ENCODE measurements at regions of chr19 and their contacts with region 1.

Region 1: GRCh38 chr19:6161271-6161850 is 25.9 kb downstream of the ACSBG2 start:
- DNase-seq: no peak
- H3K4me3 ChIP-seq: no peak overlapping the region
- H3K27ac ChIP-seq: no peak overlapping the region
- H3K4me1 ChIP-seq: no peaks in the 10 kb centered on the region
- H3K27me3 ChIP-seq: no peaks in the 10 kb centered on the region
- CTCF ChIP-seq: no peak

Region 2: DNA sequence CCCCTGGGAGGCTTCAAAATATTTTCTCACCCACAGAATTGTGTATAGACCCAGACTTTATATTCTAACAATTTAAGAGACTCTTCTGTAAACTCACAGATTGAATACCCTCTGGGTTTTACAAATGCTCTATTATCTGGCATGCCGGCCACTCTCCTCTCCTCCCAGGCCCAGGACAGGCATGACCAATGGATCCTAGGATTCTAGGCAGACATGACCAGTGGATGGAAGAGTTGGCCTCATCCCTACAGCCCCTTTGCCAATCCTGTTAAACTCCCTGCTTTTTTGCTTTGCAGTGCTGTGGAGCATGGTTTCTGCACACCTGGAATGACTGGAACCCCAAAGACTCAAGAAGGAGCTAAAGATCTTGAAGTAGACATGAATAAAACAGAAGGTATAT is 20.1 kb before region 1 on chr19:
- intact Hi-C with region 1: no loop called
- DNase-seq: no peak
- H3K4me3 ChIP-seq: no peak overlapping the region
- H3K27ac ChIP-seq: no peak overlapping the region
- H3K4me1 ChIP-seq: no peaks in the 10 kb centered on the region
- H3K27me3 ChIP-seq: no peaks in the 10 kb centered on the region
- CTCF ChIP-seq: no peak

Region 3: GRCh38 chr19:6171566-6171965 is 10.2 kb after region 1 on chr19:
- intact Hi-C with region 1: no loop called
- DNase-seq: no peak
- H3K4me3 ChIP-seq: no peak overlapping the region
- H3K27ac ChIP-seq: no peak overlapping the region
- H3K4me1 ChIP-seq: no peaks in the 10 kb centered on the region
- H3K27me3 ChIP-seq: peaks cover 0 to 3% of the 10 kb centered on the region in 2 donors
- CTCF ChIP-seq: no peak

Region 4: DNA sequence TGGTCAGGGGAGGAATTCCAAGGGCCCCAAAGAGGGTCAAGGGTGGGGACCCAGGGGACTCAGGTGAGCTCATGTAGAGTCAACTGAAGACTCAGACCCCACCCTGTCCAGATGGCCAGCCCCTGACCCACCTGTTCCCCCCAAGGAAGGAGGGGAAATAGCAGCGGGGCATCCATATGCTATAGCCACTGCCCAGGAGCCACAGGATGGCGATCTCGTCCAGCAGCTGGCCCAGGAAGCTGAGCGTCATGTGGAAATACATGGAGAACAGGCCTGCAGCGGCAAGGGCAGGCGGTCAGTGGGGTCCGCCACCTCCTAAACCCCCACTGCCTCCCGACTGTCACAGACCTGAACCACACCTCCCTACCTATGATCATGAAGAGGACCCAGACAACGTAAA is 150.7 kb after region 1 on chr19:
- intact Hi-C with region 1: loop called (anchors 10 kb)
- DNase-seq: no peak
- H3K4me3 ChIP-seq: no peak overlapping the region
- H3K27ac ChIP-seq: no peak overlapping the region
- H3K4me1 ChIP-seq: no peaks in the 10 kb centered on the region
- H3K27me3 ChIP-seq: peaks cover 0 to 26% of the 10 kb centered on the region in 2 donors
- CTCF ChIP-seq: no peak